CD8-positive, alpha-beta T cell (primary cell): ENCODE measurements at regions of chr22 and their contacts with region 1.

Region 1: GRCh38 chr22:17084554-17085276 is at the start of gene IL17RA:
- DNase-seq: peak; percentile 90 to 98 (median 94)
- ATAC-seq: peak; percentile 90
- H3K4me3 ChIP-seq: peak within 1 kb of the TSS; percentile 48 to 80
- H3K4me3 Mint-ChIP-seq: peak within 1 kb of the TSS; percentile 96
- H3K27ac ChIP-seq: peak within 1 kb of the TSS; percentile 65 to 79
- H3K27ac Mint-ChIP-seq: peak within 1 kb of the TSS; percentile 91
- H3K4me1 ChIP-seq: peaks cover 34% of the 10 kb centered on the region
- H3K4me1 Mint-ChIP-seq: peaks cover 41% of the 10 kb centered on the region
- H3K27me3 ChIP-seq: no peaks in the 10 kb centered on the region
- H3K27me3 Mint-ChIP-seq: no peaks in the 10 kb centered on the region
- CTCF ChIP-seq: no peak
- total RNA-seq, gene IL17RA: 20.4 to 24.7 TPM

Region 2: DNA sequence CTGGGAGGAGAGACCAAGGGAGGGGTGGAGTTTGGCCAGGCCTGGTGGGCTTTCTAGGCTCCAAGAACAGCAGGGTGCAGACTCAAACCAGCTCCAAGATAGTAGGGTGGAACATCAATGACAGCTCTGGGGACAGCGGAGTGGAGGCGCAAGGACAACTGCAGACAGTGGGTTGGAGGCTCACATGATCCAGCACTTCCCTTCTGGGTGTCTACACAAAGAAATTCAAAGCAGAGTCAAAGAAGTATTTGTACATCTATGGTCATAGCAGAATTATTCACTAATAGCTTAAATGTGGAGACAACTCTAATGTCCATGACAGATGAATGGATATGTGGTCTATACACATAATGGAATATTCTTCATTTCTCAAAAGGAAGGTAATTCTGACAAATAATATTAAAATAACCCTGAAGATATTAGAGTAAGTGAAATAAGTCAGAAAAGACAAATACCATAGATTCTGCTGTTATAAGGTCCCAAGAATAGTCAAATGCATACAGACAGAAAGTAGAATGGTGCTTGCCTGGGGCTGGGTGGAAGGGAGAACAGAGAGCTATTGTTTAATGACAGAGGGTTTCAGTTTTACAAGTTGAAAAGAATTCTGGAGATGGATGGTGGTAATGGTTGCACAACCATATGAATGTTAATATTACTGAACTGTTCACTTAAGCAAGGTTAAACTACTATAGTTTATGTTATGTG is 71.2 kb before region 1 on chr22:
- CTCF ChIA-PET with region 1: no interaction called
- POLR2A ChIA-PET with region 1: no interaction called
- intact Hi-C with region 1: no loop called
- DNase-seq: no peak
- ATAC-seq: no peak
- H3K4me3 ChIP-seq: no peak overlapping the region
- H3K4me3 Mint-ChIP-seq: no peak overlapping the region
- H3K27ac ChIP-seq: no peak overlapping the region
- H3K27ac Mint-ChIP-seq: no peak overlapping the region
- H3K4me1 ChIP-seq: no peaks in the 10 kb centered on the region
- H3K4me1 Mint-ChIP-seq: no peaks in the 10 kb centered on the region
- H3K27me3 ChIP-seq: peaks cover 0 to 4% of the 10 kb centered on the region in 2 experiments
- H3K27me3 Mint-ChIP-seq: peaks cover 36% of the 10 kb centered on the region
- CTCF ChIP-seq: no peak

Region 3: GRCh38 chr22:17106785-17107546 is 22.3 kb after region 1 on chr22:
- CTCF ChIA-PET with region 1: interaction called, 4 read pairs
- POLR2A ChIA-PET with region 1: interaction called, 13 read pairs
- intact Hi-C with region 1: loop called in 1 of 2 experiments (anchors 2 kb)
- DNase-seq: peak in 3 of 9 experiments; percentile 21 to 44 (median 37)
- ATAC-seq: peak; percentile 72
- H3K4me3 ChIP-seq: peak overlapping the region; percentile 24 to 28
- H3K4me3 Mint-ChIP-seq: peak overlapping the region; percentile 80
- H3K27ac ChIP-seq: peak overlapping the region; percentile 5 to 14
- H3K27ac Mint-ChIP-seq: peak overlapping the region; percentile 87
- H3K4me1 ChIP-seq: peaks cover 55% of the 10 kb centered on the region
- H3K4me1 Mint-ChIP-seq: peaks cover 48% of the 10 kb centered on the region
- H3K27me3 ChIP-seq: no peaks in the 10 kb centered on the region
- H3K27me3 Mint-ChIP-seq: no peaks in the 10 kb centered on the region
- CTCF ChIP-seq: no peak

Region 4: DNA sequence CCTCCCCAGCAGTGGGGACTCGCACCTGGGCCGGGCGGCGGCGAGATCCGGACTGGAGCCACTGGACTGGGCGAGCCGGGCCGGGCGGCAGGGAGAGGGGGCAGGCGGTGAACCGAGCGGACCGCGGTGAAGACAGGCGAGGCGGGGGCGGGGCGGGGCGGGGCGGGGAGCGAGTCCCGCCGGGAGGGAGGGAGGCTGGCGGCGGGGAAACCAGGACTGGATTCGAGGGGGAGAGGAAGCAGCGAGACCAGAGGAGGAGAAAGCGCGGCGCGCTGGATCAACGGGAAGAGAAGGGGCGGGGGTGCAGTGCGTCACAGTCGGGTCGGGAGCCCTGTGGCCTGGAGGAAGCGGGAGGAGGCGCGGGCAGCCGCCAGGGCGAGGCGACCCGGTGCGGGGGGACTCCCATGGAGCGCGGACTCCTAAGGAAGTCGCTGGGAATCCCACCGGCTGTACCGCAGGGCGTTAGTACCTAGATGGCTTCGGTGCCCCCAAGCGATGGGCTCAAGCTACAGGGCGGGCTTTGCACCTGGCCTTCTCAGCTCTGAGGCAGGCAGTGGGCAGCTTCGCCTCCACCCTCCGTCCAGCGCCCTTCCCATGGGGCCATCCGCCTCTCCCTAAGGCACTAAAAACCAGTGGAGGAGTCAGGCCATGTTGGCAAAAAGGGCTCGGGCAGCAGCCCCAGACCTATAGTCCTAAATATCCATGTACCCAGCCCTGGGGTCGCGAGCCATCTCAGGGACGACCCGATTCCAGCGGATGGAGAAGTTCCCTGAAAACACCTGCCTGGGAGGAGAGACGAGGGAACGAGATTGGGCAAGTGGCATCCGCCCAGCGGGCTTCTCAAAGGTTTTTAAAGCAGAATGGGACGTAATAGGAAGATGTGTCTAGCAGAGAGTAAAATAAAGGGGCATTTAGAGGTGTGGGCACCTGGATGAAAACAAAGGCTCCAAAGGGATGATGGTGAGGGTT is 36.8 kb after region 1 on chr22 and contains the start of gene TMEM121B:
- CTCF ChIA-PET with region 1: no interaction called
- POLR2A ChIA-PET with region 1: interaction called, 16 read pairs
- intact Hi-C with region 1: loop called (anchors 2 to 5 kb)
- DNase-seq: peak in 2 of 9 experiments; percentile 14 to 29
- ATAC-seq: no peak
- H3K4me3 ChIP-seq: no peak within 1 kb of the TSS
- H3K4me3 Mint-ChIP-seq: peak within 1 kb of the TSS; percentile 69
- H3K27ac ChIP-seq: no peak within 1 kb of the TSS
- H3K27ac Mint-ChIP-seq: no peak within 1 kb of the TSS
- H3K4me1 ChIP-seq: peaks cover 44% of the 10 kb centered on the region
- H3K4me1 Mint-ChIP-seq: peaks cover 29% of the 10 kb centered on the region
- H3K27me3 ChIP-seq: peaks cover 11% of the 10 kb centered on the region in 2 experiments
- H3K27me3 Mint-ChIP-seq: peaks cover 10% of the 10 kb centered on the region
- CTCF ChIP-seq: no peak
- total RNA-seq, gene TMEM121B: 0.11 TPM in 1 of 2 experiments, not detected in the other

Region 5: GRCh38 chr22:17213976-17214375 is 129.3 kb after region 1 on chr22:
- CTCF ChIA-PET with region 1: no interaction called
- POLR2A ChIA-PET with region 1: no interaction called
- intact Hi-C with region 1: loop called (anchors 5 kb)
- DNase-seq: peak; percentile 25 to 72 (median 53)
- ATAC-seq: peak; percentile 45
- H3K4me3 ChIP-seq: no peak overlapping the region
- H3K4me3 Mint-ChIP-seq: peak overlapping the region; percentile 22
- H3K27ac ChIP-seq: peak overlapping the region in 1 of 2 experiments; percentile 34
- H3K27ac Mint-ChIP-seq: peak overlapping the region; percentile 89
- H3K4me1 ChIP-seq: peaks cover 33% of the 10 kb centered on the region
- H3K4me1 Mint-ChIP-seq: peaks cover 61% of the 10 kb centered on the region
- H3K27me3 ChIP-seq: no peaks in the 10 kb centered on the region
- H3K27me3 Mint-ChIP-seq: no peaks in the 10 kb centered on the region
- CTCF ChIP-seq: peak; percentile 30

Region 6: GRCh38 chr22:17628304-17629166 is 543.8 kb after region 1 on chr22 and contains the start of gene ATP6V1E1:
- CTCF ChIA-PET with region 1: no interaction called
- POLR2A ChIA-PET with region 1: no interaction called
- intact Hi-C with region 1: loop called in 1 of 2 experiments (anchors 2 kb)
- DNase-seq: peak; percentile 90 to 97 (median 94)
- ATAC-seq: peak; percentile 100
- H3K4me3 ChIP-seq: peak within 1 kb of the TSS; percentile 84 to 100
- H3K4me3 Mint-ChIP-seq: peak within 1 kb of the TSS; percentile 97
- H3K27ac ChIP-seq: peak within 1 kb of the TSS; percentile 93 to 94
- H3K27ac Mint-ChIP-seq: peak within 1 kb of the TSS; percentile 99
- H3K4me1 ChIP-seq: peaks cover 23% of the 10 kb centered on the region
- H3K4me1 Mint-ChIP-seq: peaks cover 33% of the 10 kb centered on the region
- H3K27me3 ChIP-seq: no peaks in the 10 kb centered on the region
- H3K27me3 Mint-ChIP-seq: no peaks in the 10 kb centered on the region
- CTCF ChIP-seq: no peak
- total RNA-seq, gene ATP6V1E1: 49.8 to 53.0 TPM

Region 7: DNA sequence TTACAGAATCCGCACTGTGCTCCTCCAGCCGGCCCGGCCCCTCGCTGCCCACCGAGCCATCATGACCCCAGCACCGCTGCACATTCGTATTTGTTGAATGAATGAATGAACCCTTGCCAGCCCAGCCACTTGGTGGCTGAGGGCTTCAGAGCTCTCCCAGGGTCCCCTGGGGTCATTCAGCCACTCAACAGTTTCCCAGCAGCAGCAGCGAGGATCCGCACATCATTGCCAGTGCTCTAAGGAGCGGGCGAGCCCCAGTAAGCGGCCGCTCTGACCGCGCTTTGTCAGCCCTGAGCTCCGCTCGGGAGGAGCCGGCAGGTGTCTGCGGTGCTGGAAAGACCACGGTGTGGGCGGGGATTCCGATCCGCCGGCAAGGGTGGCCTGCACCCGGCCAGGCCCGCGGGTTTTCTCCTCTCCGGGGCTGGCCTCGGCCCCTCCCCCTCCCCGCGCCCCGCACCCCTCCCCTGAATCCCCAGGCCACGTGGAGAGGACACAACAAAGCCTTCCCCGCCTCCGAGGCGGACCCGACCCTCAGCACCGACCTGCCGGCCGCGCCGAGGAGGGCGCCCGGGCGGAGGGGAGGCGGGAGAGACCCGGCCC is 689.0 kb after region 1 on chr22:
- CTCF ChIA-PET with region 1: no interaction called
- POLR2A ChIA-PET with region 1: no interaction called
- intact Hi-C with region 1: loop called (anchors 5 to 10 kb)
- DNase-seq: peak; percentile 26 to 84 (median 68)
- ATAC-seq: peak; percentile 47
- H3K4me3 ChIP-seq: peak overlapping the region; percentile 65
- H3K4me3 Mint-ChIP-seq: peak overlapping the region; percentile 90
- H3K27ac ChIP-seq: peak overlapping the region; percentile 19 to 36
- H3K27ac Mint-ChIP-seq: peak overlapping the region; percentile 90
- H3K4me1 ChIP-seq: peaks cover 76% of the 10 kb centered on the region
- H3K4me1 Mint-ChIP-seq: peaks cover 78% of the 10 kb centered on the region
- H3K27me3 ChIP-seq: no peaks in the 10 kb centered on the region
- H3K27me3 Mint-ChIP-seq: no peaks in the 10 kb centered on the region
- CTCF ChIP-seq: no peak